GM10248 (cell line): ENCODE measurements at regions of chr17 and their contacts with region 1.

Region 1: DNA sequence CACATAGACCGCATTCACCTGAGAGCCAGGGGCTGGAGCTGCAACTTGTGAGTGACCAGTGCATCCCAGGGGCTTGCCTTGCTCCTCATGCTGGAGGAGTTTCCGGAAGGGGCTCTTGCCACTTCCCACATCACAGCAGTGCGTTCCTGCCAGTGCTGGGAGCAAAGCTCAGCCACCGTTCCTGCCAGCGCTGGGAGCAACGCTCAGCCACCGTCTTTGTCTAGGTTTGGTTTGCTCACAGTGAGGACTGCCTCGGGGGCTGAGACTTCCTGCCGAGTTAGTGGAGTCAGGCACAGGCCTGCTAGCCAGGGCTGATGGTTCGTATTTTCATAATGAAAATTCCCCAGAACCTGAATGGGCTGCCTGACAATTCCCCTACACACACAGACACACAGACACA is 5.4 kb upstream of the CHRNE start:
- DNase-seq: no peak
- CTCF ChIP-seq: no peak

Region 2: DNA sequence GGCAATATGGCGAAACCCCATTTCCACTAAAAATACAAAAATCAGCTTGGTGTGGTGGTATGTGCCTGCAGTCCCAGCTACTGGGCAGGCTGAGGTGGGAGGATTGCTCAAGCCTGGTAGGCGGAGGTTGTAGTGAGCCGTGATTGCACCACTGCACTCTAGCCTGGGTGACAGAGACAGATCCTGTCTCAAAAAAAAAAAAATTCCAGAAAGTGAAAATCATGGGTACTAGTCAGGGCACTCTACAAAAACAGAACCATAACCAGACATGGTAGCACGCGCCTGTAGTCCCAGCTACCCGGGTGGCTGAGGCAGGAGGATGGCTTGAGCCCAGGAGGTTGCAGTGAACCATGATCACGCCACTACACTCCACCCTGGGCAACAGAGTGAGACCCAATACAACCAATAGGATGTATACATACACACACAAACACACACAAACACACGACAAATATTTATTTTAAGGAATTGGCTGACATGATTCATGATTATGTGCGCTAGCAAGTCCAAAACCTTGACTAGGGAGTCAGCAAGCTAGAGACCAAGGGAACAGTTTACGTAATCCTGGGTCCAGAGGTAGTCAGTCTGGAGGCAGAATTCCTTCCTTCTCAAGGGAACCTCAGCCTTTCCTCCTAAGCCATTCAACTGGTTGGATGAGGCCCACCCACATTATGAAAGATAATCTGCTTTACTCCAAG is 12.2 kb after region 1 on chr17:
- CTCF ChIA-PET with region 1: interaction called, 29 read pairs
- POLR2A ChIA-PET with region 1: no interaction called
- DNase-seq: no peak
- CTCF ChIP-seq: no peak

Region 3: DNA sequence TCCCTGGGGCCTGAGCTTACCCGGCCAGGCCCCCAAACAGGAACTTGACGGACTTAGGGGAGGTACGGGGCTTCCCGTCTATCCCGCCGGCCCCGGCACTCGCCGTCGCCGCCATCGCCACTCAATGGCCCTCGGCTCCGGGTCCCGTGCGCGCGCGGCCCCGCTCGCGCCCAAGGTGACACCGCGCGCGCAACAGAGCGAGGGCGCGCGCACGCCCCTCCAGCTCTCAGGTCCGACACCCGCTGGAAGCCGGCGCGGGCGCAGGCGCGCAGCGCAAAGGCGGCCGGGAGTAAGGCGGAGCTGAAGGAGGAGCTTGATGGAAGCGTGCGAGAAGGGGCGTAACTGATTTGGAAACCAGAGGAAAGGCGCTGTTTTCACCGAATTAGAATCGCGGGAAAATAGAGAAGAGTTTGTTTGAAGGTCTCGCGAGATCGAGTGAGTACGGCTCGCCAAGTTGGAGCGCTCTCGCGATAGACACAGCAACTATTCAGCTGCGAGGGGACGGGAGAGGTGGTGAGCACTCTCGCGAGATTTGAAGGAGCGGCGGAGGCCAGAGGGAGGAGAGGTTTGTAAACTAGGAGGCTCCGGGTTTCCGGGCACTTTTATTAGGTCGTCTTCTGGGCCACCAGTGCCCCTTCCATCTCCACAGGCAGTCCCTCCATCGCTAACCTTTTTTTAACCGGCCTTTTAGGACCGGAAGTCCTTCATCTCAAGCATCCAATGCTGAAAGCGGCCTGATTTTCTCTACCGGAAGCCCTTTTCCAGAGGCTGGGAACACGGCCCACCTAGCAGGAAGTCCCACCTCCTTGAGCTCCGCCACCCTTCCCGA is 31.7 kb after region 1 on chr17 and contains the starts of genes RNF167 and SLC25A11:
- CTCF ChIA-PET with region 1: interaction called, 12 read pairs
- POLR2A ChIA-PET with region 1: interaction called, 5 read pairs
- DNase-seq: peak; percentile 97
- CTCF ChIP-seq: no peak

Region 4: DNA sequence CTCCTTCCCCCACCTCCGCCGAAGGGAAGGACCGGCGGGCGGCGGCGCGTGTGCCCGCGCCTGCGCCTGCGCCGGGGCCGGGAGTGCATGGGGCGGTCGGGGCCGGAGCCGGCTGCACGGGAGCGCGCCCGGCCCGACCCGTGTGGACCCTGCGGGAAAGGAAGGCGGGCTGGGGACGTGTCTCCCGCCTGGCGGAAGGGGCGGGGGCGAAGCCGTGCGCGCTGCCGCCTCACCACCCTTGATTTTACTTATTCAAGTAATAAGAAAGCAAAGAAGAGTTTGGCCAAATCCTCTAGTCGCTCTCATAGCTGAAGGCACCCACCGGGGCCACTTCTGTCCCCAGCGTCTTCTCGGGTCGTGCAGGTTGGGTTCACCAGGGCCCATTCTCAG is 40.6 kb after region 1 on chr17:
- CTCF ChIA-PET with region 1: interaction called, 11 read pairs
- POLR2A ChIA-PET with region 1: no interaction called
- DNase-seq: peak; percentile 86
- CTCF ChIP-seq: no peak

Region 5: GRCh38 chr17:4956493-4957061 is 48.3 kb after region 1 on chr17:
- CTCF ChIA-PET with region 1: interaction called, 23 read pairs
- POLR2A ChIA-PET with region 1: no interaction called
- DNase-seq: no peak
- CTCF ChIP-seq: peak; percentile 59